ENCODE measurements at regions of chr12 and their contacts with region 1.

Region 1: DNA sequence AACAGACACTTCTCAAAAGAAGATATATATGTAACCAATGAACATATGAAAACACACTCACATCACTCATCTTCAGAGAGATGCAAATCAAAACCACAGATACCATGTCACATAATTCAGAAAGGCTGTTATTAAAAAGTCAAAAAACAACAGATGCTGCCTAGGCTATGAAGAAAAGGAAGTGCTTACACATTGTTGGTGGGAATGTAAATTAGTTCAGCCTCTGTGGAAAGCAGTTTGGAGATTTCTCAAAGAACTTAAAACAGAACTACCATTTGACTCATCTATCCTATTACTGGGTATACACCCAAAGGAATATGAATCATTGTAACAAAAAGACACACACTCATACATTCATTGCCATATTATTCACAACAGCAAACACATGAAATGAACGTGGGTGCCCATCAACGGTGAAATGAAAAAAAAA is 35.1 kb downstream of the EIF2S3B start:
- DNase-seq: no peak
- H3K4me3 Mint-ChIP-seq: no peak overlapping the region
- H3K27ac Mint-ChIP-seq: peak overlapping the region; percentile 22
- H3K4me1 Mint-ChIP-seq: peaks cover 15% of the 10 kb centered on the region
- H3K27me3 Mint-ChIP-seq: peaks cover 36% of the 10 kb centered on the region

Region 2: GRCh38 chr12:9948606-9949296 is 592.0 kb before region 1 on chr12:
- CTCF ChIA-PET with region 1: no interaction called
- intact Hi-C with region 1: loop called (anchors 5 kb)
- DNase-seq: peak; percentile 20
- H3K4me3 Mint-ChIP-seq: no peak overlapping the region
- H3K27ac Mint-ChIP-seq: no peak overlapping the region
- H3K4me1 Mint-ChIP-seq: peaks cover 48% of the 10 kb centered on the region
- H3K27me3 Mint-ChIP-seq: no peaks in the 10 kb centered on the region

Region 3: GRCh38 chr12:10304161-10304574 is 236.6 kb before region 1 on chr12:
- CTCF ChIA-PET with region 1: no interaction called
- intact Hi-C with region 1: loop called (anchors 1 kb)
- DNase-seq: peak; percentile 59
- H3K4me3 Mint-ChIP-seq: no peak overlapping the region
- H3K27ac Mint-ChIP-seq: no peak overlapping the region
- H3K4me1 Mint-ChIP-seq: peaks cover 49% of the 10 kb centered on the region
- H3K27me3 Mint-ChIP-seq: peaks cover 5% of the 10 kb centered on the region

Region 4: GRCh38 chr12:10354502-10354901 is 186.3 kb before region 1 on chr12:
- CTCF ChIA-PET with region 1: no interaction called
- intact Hi-C with region 1: no loop called
- DNase-seq: no peak
- H3K4me3 Mint-ChIP-seq: no peak overlapping the region
- H3K27ac Mint-ChIP-seq: no peak overlapping the region
- H3K4me1 Mint-ChIP-seq: no peaks in the 10 kb centered on the region
- H3K27me3 Mint-ChIP-seq: peaks cover 5% of the 10 kb centered on the region

Region 5: DNA sequence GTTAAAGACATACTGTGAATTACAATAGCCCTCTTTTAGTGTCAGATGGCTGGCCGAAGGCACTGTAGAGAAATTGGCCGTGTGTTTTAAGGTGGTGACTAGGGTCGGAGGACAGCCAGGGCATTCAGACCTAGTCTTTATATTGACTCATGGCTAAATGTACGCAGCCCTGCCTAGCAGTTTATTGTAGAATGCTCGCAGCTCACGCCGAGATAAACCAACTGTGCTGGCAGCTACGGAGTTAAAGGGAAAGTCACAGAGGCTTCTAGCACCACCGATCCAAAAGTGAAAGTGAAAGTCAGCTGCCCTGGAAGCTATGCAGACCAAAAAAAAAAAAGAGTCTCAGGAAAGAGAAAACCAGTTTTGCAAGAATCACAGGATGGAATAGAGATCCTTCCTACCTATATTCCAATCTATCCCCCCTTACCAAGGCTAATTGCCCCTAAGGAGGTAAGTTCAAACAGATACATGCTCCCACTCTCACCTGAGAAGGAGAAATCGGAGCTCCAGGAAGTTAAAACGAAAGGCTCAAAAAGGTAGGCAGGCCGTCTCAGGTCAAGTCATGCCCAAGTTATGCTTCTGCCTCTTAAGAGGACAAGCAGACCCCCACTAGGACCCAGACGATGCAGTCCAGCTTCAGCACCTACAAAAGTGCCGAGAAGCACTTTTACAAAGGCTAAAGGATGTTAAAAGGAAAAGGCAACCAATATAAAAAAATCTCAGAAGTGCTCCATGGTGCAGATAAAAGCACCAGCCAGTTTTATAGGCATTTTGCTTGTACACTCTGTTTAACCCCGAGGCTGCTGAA is 175.8 kb before region 1 on chr12:
- CTCF ChIA-PET with region 1: interaction called, 4 read pairs
- intact Hi-C with region 1: loop called (anchors 2 kb)
- DNase-seq: peak; percentile 72
- H3K4me3 Mint-ChIP-seq: no peak overlapping the region
- H3K27ac Mint-ChIP-seq: no peak overlapping the region
- H3K4me1 Mint-ChIP-seq: peaks cover 15% of the 10 kb centered on the region
- H3K27me3 Mint-ChIP-seq: no peaks in the 10 kb centered on the region

Region 6: DNA sequence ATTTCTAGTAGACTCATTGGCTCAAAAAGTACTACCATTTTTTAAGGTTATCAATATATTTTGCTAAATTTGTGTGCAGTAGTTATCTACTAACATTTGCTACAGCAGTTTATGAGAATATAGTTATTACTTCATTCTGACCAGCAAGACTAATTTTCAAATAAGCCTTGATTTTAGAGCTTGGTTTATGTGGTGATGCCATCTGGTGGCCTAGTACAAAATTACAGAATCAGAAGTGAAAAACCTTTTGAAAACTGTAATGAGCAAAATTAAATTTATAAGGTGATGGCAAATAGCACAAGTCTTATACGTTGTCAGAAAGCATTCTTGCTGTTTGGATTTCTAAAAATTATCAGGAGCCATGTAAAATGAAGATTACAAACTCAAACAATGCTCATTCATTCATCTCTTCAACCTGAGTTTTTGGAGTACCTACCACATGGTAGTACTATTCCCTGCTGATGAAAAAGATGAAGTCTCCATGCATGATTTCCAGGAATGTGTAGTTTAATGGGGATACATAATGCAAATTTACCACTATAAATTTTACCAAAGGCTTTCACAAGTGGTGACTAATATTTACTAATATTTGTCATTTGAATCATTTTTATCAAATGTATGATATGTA is 21.6 kb after region 1 on chr12:
- CTCF ChIA-PET with region 1: interaction called, 7 read pairs
- intact Hi-C with region 1: loop called (anchors 2 kb)
- DNase-seq: peak; percentile 36
- H3K4me3 Mint-ChIP-seq: no peak overlapping the region
- H3K27ac Mint-ChIP-seq: no peak overlapping the region
- H3K4me1 Mint-ChIP-seq: peaks cover 5% of the 10 kb centered on the region
- H3K27me3 Mint-ChIP-seq: peaks cover 15% of the 10 kb centered on the region

Measured in activated naive CD4-positive, alpha-beta T cell treated with anti-CD3 and anti-CD28 coated beads for 36 hours (primary cell).